Caco-2 (cell line): ENCODE measurements at regions of chr11 and their contacts with region 1.

Region 1: DNA sequence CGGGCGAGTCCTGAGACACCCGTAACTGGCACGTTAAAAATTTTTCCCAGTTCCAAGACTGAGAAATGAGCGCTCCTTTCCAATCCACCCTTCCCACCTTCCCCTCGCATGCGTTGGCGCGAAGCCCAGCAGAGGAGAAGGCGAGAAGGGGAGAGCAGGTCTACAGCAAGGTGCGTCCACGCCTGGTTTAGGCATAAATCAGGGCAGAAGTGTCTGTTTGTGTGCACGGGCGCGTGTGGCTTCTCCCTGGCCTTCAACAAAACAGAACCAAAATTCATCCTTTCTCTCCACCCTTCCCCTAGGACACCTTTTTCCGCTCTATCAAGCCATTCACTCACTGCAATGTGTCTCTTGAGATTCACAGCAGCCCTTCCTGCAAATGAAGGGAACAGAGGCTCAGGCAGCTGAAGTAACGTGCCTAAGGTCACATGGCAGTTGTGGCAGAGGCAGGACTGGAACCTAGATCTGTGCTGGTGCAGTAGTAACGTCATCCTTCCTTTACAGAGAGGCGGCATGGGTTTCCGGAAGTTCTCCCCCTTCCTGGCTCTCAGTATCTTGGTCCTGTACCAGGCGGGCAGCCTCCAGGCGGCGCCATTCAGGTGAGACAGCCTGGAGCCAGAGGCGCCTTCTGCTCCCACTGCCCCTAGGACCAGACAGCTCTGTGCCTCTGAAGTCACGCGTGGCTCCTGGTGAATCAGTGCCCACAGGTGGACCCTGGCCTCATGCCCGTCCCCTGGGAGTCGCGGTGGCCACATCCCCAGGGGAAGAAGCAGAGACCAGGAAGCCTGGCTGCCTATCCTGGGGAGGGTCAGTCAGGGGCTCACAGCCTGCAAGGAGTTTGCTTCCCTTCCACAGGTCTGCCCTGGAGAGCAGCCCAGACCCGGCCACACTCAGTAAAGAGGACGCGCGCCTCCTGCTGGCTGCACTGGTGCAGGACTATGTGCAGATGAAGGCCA is 1.1 kb downstream of the CALCB start:
- DNase-seq: peak; percentile 83 to 86
- H3K4me3 ChIP-seq: no peak overlapping the region
- H3K4me3 Mint-ChIP-seq: peak overlapping the region; percentile 67
- H3K27ac Mint-ChIP-seq: no peak overlapping the region
- H3K4me1 ChIP-seq: no peaks in the 10 kb centered on the region
- H3K4me1 Mint-ChIP-seq: no peaks in the 10 kb centered on the region
- H3K27me3 ChIP-seq: peaks cover 1% of the 10 kb centered on the region; the same call in 1 of the 2 replicates
- H3K27me3 Mint-ChIP-seq: peaks cover 15% of the 10 kb centered on the region
- CTCF ChIP-seq: peak; percentile 82 to 86

Region 2: GRCh38 chr11:15038963-15039362 is 35.5 kb before region 1 on chr11:
- CTCF ChIA-PET with region 1: interaction called, 6 read pairs
- POLR2A ChIA-PET with region 1: no interaction called
- intact Hi-C with region 1: loop called (anchors 1 kb)
- DNase-seq: no peak
- H3K4me3 ChIP-seq: no peak overlapping the region
- H3K4me3 Mint-ChIP-seq: no peak overlapping the region
- H3K27ac Mint-ChIP-seq: no peak overlapping the region
- H3K4me1 ChIP-seq: no peaks in the 10 kb centered on the region
- H3K4me1 Mint-ChIP-seq: no peaks in the 10 kb centered on the region
- H3K27me3 ChIP-seq: no peaks in the 10 kb centered on the region; the same call in 1 of the 2 replicates
- H3K27me3 Mint-ChIP-seq: peaks cover 11% of the 10 kb centered on the region
- CTCF ChIP-seq: peak in 1 of 2 experiments; percentile 21

Region 3: DNA sequence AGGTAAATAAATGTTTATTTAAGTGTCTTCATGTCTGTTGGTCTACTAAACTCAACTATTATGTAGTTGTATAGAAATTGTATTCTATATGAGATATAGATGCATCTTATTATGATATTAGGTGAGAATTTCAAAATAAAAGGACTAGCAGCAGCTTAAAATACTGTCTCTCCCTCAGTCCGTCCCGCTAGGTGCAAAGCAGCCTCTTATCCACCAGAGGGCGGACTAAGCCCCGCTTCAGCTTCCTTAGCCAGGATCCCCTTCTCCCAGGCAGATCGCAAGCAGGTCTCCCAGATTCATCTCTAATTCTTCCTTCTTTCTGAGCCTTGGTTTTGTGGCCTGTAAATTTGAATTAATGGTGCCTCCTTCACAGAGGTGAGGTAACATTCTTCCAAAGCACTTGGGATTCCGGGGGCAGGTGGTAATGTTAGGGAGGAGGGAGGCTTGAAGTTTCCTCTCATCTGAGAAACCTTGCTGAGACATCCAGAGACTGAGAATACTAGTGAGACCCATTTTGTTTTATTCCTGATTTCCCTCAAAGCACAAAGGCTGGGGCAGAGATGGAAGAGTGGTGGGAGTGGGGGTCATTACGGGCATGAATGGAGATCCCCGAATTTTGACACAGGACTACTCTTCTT is 26.7 kb after region 1 on chr11:
- CTCF ChIA-PET with region 1: no interaction called
- POLR2A ChIA-PET with region 1: no interaction called
- intact Hi-C with region 1: no loop called
- DNase-seq: peak; percentile 62 to 71
- H3K4me3 ChIP-seq: no peak overlapping the region
- H3K4me3 Mint-ChIP-seq: no peak overlapping the region
- H3K27ac Mint-ChIP-seq: no peak overlapping the region
- H3K4me1 ChIP-seq: no peaks in the 10 kb centered on the region
- H3K4me1 Mint-ChIP-seq: no peaks in the 10 kb centered on the region
- H3K27me3 ChIP-seq: no peaks in the 10 kb centered on the region
- H3K27me3 Mint-ChIP-seq: peaks cover 8% of the 10 kb centered on the region
- CTCF ChIP-seq: peak; percentile 88 to 96

Region 4: GRCh38 chr11:15123849-15124248 is 49.4 kb after region 1 on chr11:
- CTCF ChIA-PET with region 1: no interaction called
- POLR2A ChIA-PET with region 1: no interaction called
- intact Hi-C with region 1: no loop called
- DNase-seq: no peak
- H3K4me3 ChIP-seq: no peak overlapping the region
- H3K4me3 Mint-ChIP-seq: no peak overlapping the region
- H3K27ac Mint-ChIP-seq: no peak overlapping the region
- H3K4me1 ChIP-seq: no peaks in the 10 kb centered on the region
- H3K4me1 Mint-ChIP-seq: no peaks in the 10 kb centered on the region
- H3K27me3 ChIP-seq: no peaks in the 10 kb centered on the region; the same call in 1 of the 2 replicates
- H3K27me3 Mint-ChIP-seq: peaks cover 16% of the 10 kb centered on the region
- CTCF ChIP-seq: no peak

Region 5: DNA sequence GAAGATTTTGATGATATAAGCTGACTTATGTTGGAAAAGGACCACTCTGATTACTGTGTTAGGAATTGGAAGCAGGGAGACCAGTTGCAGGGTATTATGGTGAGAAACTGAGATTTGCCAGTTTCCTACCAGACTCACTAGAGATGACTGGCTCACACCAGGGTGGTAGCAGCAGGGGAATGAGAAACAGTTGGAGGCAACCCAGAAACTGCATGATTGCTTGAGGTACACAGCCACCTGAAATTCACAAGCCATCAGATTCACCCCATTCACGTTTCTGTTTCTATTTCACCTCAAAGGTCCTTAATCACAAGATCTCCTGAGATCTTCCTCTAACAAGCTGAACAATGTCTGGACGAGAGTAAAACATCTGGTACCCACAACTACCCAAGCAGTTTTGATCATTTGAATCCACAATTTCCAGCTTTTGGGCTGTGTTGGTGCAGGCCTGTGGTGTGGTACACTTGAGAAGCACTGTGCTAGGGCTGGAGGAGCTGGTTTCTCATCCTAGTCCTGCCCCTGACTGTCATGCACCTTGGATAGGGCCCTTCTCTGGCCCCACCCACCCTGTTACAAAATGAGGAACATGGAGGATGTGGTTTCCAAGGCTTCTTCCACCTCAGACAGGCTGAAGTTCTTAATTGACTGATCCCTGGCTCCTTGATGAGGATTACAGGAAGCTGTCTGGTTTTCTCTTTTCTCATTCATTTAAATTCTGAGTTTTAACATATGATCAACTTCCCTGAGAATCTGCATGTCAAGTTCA is 273.7 kb after region 1 on chr11:
- CTCF ChIA-PET with region 1: no interaction called
- POLR2A ChIA-PET with region 1: no interaction called
- intact Hi-C with region 1: no loop called
- DNase-seq: no peak
- H3K4me3 ChIP-seq: no peak overlapping the region
- H3K4me3 Mint-ChIP-seq: no peak overlapping the region
- H3K27ac Mint-ChIP-seq: no peak overlapping the region
- H3K4me1 ChIP-seq: no peaks in the 10 kb centered on the region; the same call in 1 of the 2 replicates
- H3K4me1 Mint-ChIP-seq: no peaks in the 10 kb centered on the region
- H3K27me3 ChIP-seq: no peaks in the 10 kb centered on the region
- H3K27me3 Mint-ChIP-seq: peaks cover 7% of the 10 kb centered on the region
- CTCF ChIP-seq: no peak